Dendritic cell treated with granulocyte-macrophage colony-stimulating factor and Interleukin-4, amounts not matched to agents 40 ng/mL and 50 ng/mL, for 4 days (primary cell): ENCODE measurements at regions of chr20 and their contacts with region 1.

Region 1: GRCh38 chr20:58870239-58871014 is 17.9 kb downstream of the GNAS start:
- H3K4me3 Mint-ChIP-seq: no peak overlapping the region
- H3K27ac Mint-ChIP-seq: no peak overlapping the region
- H3K4me1 Mint-ChIP-seq: peaks cover 13% of the 10 kb centered on the region
- H3K27me3 Mint-ChIP-seq: peaks cover 34% of the 10 kb centered on the region

Region 2: DNA sequence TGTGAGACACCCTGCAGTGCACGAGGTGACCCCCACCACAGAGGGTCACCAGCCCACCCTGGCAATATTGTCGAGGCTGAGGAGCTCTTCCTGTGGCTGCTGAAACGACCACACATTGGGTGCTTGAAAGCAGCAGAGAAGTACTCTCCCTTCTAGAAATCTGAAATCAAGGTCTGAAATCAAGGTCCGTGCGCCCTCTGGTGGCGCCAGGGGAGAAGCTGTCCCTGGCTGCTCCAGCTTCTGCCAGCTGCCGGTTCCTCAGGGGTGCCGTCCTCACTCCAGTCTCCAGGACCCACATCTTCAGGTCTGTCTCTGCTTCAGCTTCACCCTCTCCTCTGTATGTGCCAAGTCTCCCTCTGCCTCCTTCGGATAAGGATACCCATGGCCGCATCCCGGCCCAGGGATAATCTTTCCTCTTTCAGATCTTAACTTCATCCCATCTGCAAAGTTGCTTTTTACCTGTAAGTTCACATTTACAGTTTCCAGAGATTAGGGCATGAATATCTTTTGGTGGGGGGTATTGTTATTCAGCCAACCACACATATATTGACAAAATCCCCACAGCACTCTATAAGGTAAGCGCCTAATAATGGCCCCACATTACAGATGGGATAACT is 625.6 kb after region 1 on chr20:
- intact Hi-C with region 1: loop called (anchors 5 kb)
- H3K4me3 Mint-ChIP-seq: no peak overlapping the region
- H3K27ac Mint-ChIP-seq: no peak overlapping the region
- H3K4me1 Mint-ChIP-seq: no peaks in the 10 kb centered on the region
- H3K27me3 Mint-ChIP-seq: peaks cover 5% of the 10 kb centered on the region